ENCODE measurements at regions of chr2 and their contacts with region 1.

Region 1: DNA sequence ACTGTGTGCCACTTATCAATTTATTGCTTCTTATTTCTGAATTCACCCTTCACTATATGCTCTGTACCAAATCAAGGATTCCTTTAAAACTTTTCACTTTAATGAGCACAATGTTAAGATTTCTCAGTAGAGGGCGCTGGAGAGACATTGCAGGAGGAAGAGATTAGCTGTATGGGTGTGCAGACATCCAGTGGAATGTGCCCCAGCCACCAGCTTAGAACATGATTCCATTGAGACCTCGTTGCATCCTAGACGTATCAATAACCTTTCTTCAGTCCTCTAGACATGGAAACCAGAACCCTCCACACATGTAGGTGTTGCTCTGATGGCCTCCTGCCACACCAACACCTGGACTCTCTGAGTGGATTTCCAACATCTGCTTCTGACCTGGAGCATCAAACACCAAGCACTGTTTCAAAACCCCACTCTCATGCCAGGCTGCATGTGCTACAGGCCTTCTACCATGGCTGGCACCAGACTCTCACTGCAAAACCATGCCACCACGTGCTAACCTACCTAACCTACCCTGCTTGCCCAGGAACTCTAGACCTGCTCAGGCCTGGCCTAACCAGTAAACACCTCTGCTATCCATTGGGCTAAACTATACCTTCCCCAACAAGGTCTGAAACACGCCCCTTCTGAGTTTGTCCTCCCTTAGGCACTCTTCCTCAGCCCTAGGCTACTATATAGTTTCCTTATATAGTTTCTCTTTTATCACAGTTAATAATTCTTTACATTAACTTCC is 633.2 kb upstream of the PKDCC start:
- H3K4me3 ChIP-seq: no peak overlapping the region
- H3K27ac ChIP-seq: no peak overlapping the region
- H3K4me1 ChIP-seq: no peaks in the 10 kb centered on the region
- CTCF ChIP-seq: no peak

Region 2: GRCh38 chr2:41698678-41699422 is 284.2 kb after region 1 on chr2:
- CTCF ChIA-PET with region 1: interaction called, 20 read pairs
- POLR2A ChIA-PET with region 1: no interaction called
- H3K4me3 ChIP-seq: no peak overlapping the region
- H3K27ac ChIP-seq: no peak overlapping the region
- H3K4me1 ChIP-seq: no peaks in the 10 kb centered on the region
- CTCF ChIP-seq: 0 out of 2 replicates have a peak, but pooled peaks have one; percentile 23